Natural killer cell (primary cell): ENCODE measurements at regions of chr9 and their contacts with region 1.

Region 1: DNA sequence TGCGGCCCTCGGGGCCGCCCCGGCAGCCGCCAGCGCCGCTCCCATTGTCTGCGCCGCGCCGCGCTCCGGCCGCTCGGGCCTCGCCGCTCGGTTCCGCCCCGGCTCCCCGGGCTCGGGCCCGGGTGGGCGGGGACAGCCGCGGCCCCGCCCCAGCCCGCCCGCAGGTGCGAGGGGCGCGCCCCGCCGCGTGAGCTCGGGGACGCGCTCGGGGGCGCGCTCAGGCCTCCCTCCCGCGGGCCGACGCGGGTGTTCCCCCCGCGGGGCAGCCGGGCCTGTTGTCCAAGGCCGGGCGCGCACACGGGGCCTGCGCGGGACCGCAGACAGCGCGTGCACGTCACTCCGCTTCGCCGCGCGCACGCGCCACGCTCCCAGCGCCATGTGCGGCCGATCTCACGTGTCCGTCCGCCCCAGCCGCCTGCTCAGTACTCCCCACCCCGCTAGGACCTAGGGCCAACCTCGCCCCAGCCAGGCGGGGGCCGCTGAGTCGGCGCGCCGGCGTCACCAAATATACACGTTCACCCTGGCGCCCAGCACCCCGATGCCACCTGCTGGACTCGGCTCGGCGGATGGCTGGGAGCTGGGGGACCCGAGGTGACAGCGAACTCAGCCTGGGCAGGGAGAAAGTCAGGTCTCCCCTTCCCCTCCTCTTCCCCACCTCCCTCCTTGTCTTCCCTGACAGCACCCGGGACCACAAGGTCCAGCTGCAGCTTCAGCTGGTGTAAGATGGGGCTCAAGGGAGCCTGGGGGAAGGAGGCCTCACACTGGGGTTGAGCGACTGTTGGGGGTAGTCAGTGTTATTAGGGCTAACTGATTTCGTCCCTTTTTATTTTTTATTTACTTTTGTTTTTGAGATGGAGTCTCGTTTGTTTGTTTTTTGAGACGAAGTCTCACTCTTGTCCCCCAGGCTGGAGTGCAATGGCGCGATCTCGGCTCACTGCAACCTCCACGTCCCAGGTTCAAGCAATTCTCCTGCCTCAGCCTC is 14.3 kb downstream of the GBGT1 start:
- DNase-seq: peak; percentile 83 to 92
- ATAC-seq: peak; percentile 68 to 84 (median 75)
- H3K4me3 ChIP-seq: peak overlapping the region; percentile 48
- H3K4me3 Mint-ChIP-seq: peak overlapping the region; percentile 88
- H3K27ac ChIP-seq: peak overlapping the region; percentile 70
- H3K27ac Mint-ChIP-seq: peak overlapping the region; percentile 74 to 98
- H3K4me1 ChIP-seq: peaks cover 46% of the 10 kb centered on the region
- H3K4me1 Mint-ChIP-seq: peaks cover 25 to 39% of the 10 kb centered on the region in 2 donors
- H3K27me3 ChIP-seq: no peaks in the 10 kb centered on the region
- H3K27me3 Mint-ChIP-seq: peaks cover 0 to 2% of the 10 kb centered on the region in 2 donors
- CTCF ChIP-seq: peak; percentile 64

Region 2: DNA sequence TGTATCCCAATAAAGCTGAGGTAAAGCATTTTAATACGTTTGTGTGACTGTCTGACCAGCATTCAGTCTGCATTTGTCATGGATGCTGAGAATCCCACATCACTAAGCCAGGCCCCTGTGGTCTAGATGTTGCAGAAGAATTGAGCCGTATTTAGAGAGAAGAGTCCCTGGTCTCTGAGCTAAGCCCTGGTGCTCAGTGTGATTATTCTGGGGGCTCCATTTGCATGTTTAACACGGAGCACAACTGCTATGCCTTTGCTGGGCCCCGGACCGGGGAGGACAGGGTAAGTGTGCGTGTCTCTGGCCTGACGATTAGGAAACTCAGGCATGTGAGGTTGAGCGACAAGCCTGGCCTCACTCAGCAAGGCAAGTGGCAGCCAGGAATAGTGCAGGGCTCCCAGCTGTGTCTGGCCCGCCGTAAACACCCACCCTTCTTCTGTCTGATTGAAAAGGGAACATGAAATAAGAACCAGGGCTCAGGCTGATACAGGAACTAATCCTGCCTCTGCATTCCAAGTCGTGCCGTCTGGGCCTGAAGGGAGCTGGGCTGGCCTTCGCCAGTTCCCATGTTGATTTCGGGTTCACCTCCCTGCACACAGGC is 1895.4 kb before region 1 on chr9:
- intact Hi-C with region 1: loop called (anchors 10 kb)
- DNase-seq: no peak
- ATAC-seq: no peak
- H3K4me3 ChIP-seq: no peak overlapping the region
- H3K4me3 Mint-ChIP-seq: peak overlapping the region; percentile 91
- H3K27ac ChIP-seq: peak overlapping the region; percentile 59
- H3K27ac Mint-ChIP-seq: peak overlapping the region; percentile 95 to 99
- H3K4me1 ChIP-seq: peaks cover 84% of the 10 kb centered on the region
- H3K4me1 Mint-ChIP-seq: peaks cover 38 to 56% of the 10 kb centered on the region in 2 donors
- H3K27me3 ChIP-seq: no peaks in the 10 kb centered on the region
- H3K27me3 Mint-ChIP-seq: no peaks in the 10 kb centered on the region
- CTCF ChIP-seq: no peak

Region 3: GRCh38 chr9:133041958-133042357 is 107.5 kb before region 1 on chr9:
- intact Hi-C with region 1: loop called (anchors 1 kb)
- DNase-seq: no peak
- ATAC-seq: no peak
- H3K4me3 ChIP-seq: no peak overlapping the region
- H3K4me3 Mint-ChIP-seq: no peak overlapping the region
- H3K27ac ChIP-seq: no peak overlapping the region
- H3K27ac Mint-ChIP-seq: no peak overlapping the region
- H3K4me1 ChIP-seq: no peaks in the 10 kb centered on the region
- H3K4me1 Mint-ChIP-seq: peaks cover 18 to 35% of the 10 kb centered on the region in 2 donors
- H3K27me3 ChIP-seq: no peaks in the 10 kb centered on the region
- H3K27me3 Mint-ChIP-seq: no peaks in the 10 kb centered on the region
- CTCF ChIP-seq: no peak

Region 4: GRCh38 chr9:133103183-133103986 is 46.0 kb before region 1 on chr9:
- intact Hi-C with region 1: loop called (anchors 1 kb)
- DNase-seq: peak; percentile 71
- ATAC-seq: peak; percentile 69 to 81 (median 80)
- H3K4me3 ChIP-seq: no peak overlapping the region
- H3K4me3 Mint-ChIP-seq: no peak overlapping the region
- H3K27ac ChIP-seq: peak overlapping the region; percentile 15
- H3K27ac Mint-ChIP-seq: peak overlapping the region; percentile 85 to 87
- H3K4me1 ChIP-seq: peaks cover 5% of the 10 kb centered on the region
- H3K4me1 Mint-ChIP-seq: peaks cover 0 to 6% of the 10 kb centered on the region in 2 donors
- H3K27me3 ChIP-seq: no peaks in the 10 kb centered on the region
- H3K27me3 Mint-ChIP-seq: no peaks in the 10 kb centered on the region
- CTCF ChIP-seq: peak; percentile 97

Region 5: GRCh38 chr9:133121198-133121939 is 28.0 kb before region 1 on chr9 and contains the start of gene RALGDS:
- intact Hi-C with region 1: loop called (anchors 1 kb)
- DNase-seq: peak; percentile 87 to 95
- ATAC-seq: peak; percentile 78 to 92 (median 84)
- H3K4me3 ChIP-seq: peak within 1 kb of the TSS; percentile 44
- H3K4me3 Mint-ChIP-seq: peak within 1 kb of the TSS; percentile 82
- H3K27ac ChIP-seq: peak within 1 kb of the TSS; percentile 97
- H3K27ac Mint-ChIP-seq: peak within 1 kb of the TSS; percentile 75 to 97
- H3K4me1 ChIP-seq: peaks cover 92% of the 10 kb centered on the region
- H3K4me1 Mint-ChIP-seq: peaks cover 40 to 68% of the 10 kb centered on the region in 2 donors
- H3K27me3 ChIP-seq: no peaks in the 10 kb centered on the region
- H3K27me3 Mint-ChIP-seq: no peaks in the 10 kb centered on the region
- CTCF ChIP-seq: no peak
- total RNA-seq, gene RALGDS: 206 to 250 (median 208) TPM

Region 6: DNA sequence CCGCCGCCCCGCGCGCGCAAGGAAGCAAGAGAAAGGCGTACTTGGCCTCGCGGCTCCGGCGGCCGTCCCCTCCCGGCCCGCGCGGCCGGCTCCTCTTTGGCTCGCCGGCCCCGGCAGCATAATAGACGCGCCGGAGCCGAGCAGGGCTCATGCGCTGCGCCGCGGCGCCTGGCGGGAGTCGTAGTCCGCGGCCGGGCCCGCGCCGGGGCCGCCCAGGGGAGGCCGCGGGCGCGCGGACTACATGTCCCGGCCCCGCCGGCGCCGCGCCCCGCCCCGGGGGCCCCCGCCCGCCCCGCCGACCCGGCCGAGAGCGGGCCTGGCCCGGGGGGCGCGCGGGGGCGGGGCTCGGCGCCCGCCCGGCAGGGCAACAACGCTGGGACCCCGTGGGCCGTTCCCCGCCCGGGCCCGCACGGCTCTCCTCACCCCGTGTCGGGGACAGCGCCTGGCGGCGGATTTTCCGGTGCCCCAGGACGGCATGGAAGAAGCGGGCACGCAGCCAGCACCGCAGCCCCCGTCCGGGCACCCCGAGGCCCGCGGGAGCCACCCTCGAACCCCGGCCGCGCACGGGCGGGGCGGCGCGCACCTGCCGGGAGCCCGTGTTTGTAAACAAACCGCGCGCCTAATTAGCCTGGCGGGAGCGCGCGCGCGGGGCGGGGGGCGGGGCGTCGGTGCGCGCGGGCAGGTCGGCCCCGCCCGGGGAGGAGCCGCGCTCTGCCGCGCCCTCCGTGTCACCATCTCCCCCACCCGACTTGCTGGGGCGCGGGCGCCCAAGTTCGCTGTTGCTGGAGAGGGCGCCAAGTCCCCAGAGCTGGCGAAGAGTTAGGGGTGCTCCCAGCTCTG is 918.7 kb after region 1 on chr9 and contains the start of gene BRD3:
- intact Hi-C with region 1: loop called (anchors 10 kb)
- DNase-seq: peak; percentile 80 to 95
- ATAC-seq: peak; percentile 76 to 92 (median 84)
- H3K4me3 ChIP-seq: peak within 1 kb of the TSS; percentile 64
- H3K4me3 Mint-ChIP-seq: peak within 1 kb of the TSS; percentile 94
- H3K27ac ChIP-seq: peak within 1 kb of the TSS; percentile 84
- H3K27ac Mint-ChIP-seq: peak within 1 kb of the TSS; percentile 92 to 94
- H3K4me1 ChIP-seq: peaks cover 46% of the 10 kb centered on the region
- H3K4me1 Mint-ChIP-seq: peaks cover 13 to 25% of the 10 kb centered on the region in 2 donors
- H3K27me3 ChIP-seq: peaks cover 5% of the 10 kb centered on the region
- H3K27me3 Mint-ChIP-seq: peaks cover 8 to 9% of the 10 kb centered on the region in 2 donors
- CTCF ChIP-seq: no peak
- total RNA-seq, gene BRD3: 52.8 to 63.0 (median 52.8) TPM